Endothelial cell of umbilical vein (primary cell): ENCODE measurements at regions of chr1 and their contacts with region 1.

Region 1: GRCh38 chr1:8121261-8122170 is 95.4 kb upstream of the ERRFI1 start:
- DNase-seq: peak; percentile 99
- H3K4me3 ChIP-seq: peak overlapping the region in 1 of 3 experiments; percentile 6
- H3K27ac ChIP-seq: peak overlapping the region; percentile 96
- H3K4me1 ChIP-seq: peaks cover 50% of the 10 kb centered on the region
- H3K27me3 ChIP-seq: no peaks in the 10 kb centered on the region
- CTCF ChIP-seq: no peak
- POLR2A ChIP-seq: peak; percentile 44

Region 2: GRCh38 chr1:8026153-8026975 is 95.2 kb before region 1 on chr1 and contains the start of gene ERRFI1:
- CTCF ChIA-PET with region 1: interaction called, 9 read pairs
- POLR2A ChIA-PET with region 1: interaction called, 3 read pairs
- dilution Hi-C with region 1: no loop called
- intact Hi-C with region 1: loop called (anchors 2 kb)
- DNase-seq: peak; percentile 94
- H3K4me3 ChIP-seq: peak within 1 kb of the TSS; percentile 81 to 98 (median 94)
- H3K27ac ChIP-seq: peak within 1 kb of the TSS; percentile 63
- H3K4me1 ChIP-seq: peaks cover 57% of the 10 kb centered on the region
- H3K27me3 ChIP-seq: no peaks in the 10 kb centered on the region
- CTCF ChIP-seq: no peak
- POLR2A ChIP-seq: peak; percentile 99
- total RNA-seq, gene ERRFI1: 28.1 and 31.2 TPM in 2 replicates

Region 3: DNA sequence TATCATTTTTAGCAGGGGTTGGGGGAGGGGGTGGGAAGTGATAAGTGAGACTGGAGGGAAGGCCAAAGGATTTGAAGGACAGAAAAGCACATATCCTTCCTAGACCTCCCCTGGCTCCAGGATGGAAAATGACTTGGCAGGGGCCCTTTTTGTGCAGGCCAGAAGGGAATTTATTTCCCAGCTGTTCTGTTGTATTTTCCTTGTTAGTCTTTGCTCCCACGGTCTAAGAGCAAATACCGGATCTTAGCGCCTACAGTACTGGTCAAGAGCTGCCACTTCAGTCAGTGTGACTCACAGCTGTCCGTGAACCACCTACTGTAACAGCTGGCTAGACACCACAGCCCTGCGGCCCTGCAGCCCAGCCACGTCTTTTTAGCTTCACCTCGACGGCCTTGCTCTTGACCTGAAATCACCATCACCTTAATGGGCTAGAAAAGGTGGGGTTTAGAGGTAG is 44.4 kb before region 1 on chr1:
- CTCF ChIA-PET with region 1: interaction called, 7 read pairs
- POLR2A ChIA-PET with region 1: no interaction called
- dilution Hi-C with region 1: no loop called
- intact Hi-C with region 1: loop called (anchors 1 kb)
- DNase-seq: peak; percentile 94
- H3K4me3 ChIP-seq: no peak overlapping the region
- H3K27ac ChIP-seq: peak overlapping the region; percentile 76
- H3K4me1 ChIP-seq: peaks cover 22% of the 10 kb centered on the region
- H3K27me3 ChIP-seq: no peaks in the 10 kb centered on the region
- CTCF ChIP-seq: no peak
- POLR2A ChIP-seq: no peak

Region 4: GRCh38 chr1:8137481-8138244 is 16.1 kb after region 1 on chr1:
- CTCF ChIA-PET with region 1: interaction called, 22 read pairs
- POLR2A ChIA-PET with region 1: interaction called, 18 read pairs
- dilution Hi-C with region 1: no loop called
- intact Hi-C with region 1: loop called (anchors 1 kb)
- DNase-seq: peak; percentile 97
- H3K4me3 ChIP-seq: no peak overlapping the region
- H3K27ac ChIP-seq: peak overlapping the region; percentile 81
- H3K4me1 ChIP-seq: peaks cover 39% of the 10 kb centered on the region
- H3K27me3 ChIP-seq: no peaks in the 10 kb centered on the region
- CTCF ChIP-seq: no peak
- POLR2A ChIP-seq: no peak

Region 5: GRCh38 chr1:8197493-8198282 is 76.2 kb after region 1 on chr1:
- CTCF ChIA-PET with region 1: interaction called, 5 read pairs
- POLR2A ChIA-PET with region 1: no interaction called
- dilution Hi-C with region 1: no loop called
- intact Hi-C with region 1: loop called (anchors 1 kb)
- DNase-seq: peak; percentile 94
- H3K4me3 ChIP-seq: no peak overlapping the region
- H3K27ac ChIP-seq: peak overlapping the region; percentile 18
- H3K4me1 ChIP-seq: peaks cover 24% of the 10 kb centered on the region
- H3K27me3 ChIP-seq: no peaks in the 10 kb centered on the region
- CTCF ChIP-seq: no peak
- POLR2A ChIP-seq: peak; percentile 50

Region 6: GRCh38 chr1:8211589-8212442 is 90.3 kb after region 1 on chr1:
- CTCF ChIA-PET with region 1: interaction called, 5 read pairs
- POLR2A ChIA-PET with region 1: no interaction called
- dilution Hi-C with region 1: no loop called
- intact Hi-C with region 1: loop called (anchors 1 kb)
- DNase-seq: peak; percentile 92
- H3K4me3 ChIP-seq: no peak overlapping the region
- H3K27ac ChIP-seq: peak overlapping the region; percentile 85
- H3K4me1 ChIP-seq: peaks cover 17% of the 10 kb centered on the region
- H3K27me3 ChIP-seq: no peaks in the 10 kb centered on the region
- CTCF ChIP-seq: peak in 1 of 2 donors; percentile 14
- POLR2A ChIP-seq: peak; percentile 32

Region 7: DNA sequence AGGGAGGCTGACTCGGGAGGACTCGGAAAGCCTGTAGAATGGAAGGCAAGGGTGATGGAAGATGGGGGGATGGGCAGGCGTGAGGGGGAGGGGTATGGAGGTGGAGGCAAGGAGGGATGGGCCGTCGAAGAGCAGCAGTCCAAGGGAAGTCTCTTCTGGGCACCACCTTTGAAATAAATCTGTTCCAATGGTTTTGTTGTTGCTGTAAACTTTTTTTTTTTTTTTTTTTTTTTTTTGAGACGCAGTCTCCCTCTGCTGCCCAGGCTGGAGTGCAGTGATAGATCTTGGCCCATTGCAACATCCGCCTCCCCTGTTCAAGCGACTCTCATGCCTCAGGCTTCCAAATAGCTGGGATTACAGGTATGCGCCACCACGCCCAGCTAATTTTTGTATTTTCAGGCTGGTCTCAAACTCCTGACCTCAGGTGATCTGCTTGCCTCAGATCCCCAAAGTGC is 117.4 kb after region 1 on chr1:
- CTCF ChIA-PET with region 1: interaction called, 3 read pairs
- POLR2A ChIA-PET with region 1: no interaction called
- dilution Hi-C with region 1: no loop called
- intact Hi-C with region 1: loop called (anchors 2 kb)
- DNase-seq: peak; percentile 33
- H3K4me3 ChIP-seq: no peak overlapping the region
- H3K27ac ChIP-seq: peak overlapping the region; percentile 36
- H3K4me1 ChIP-seq: peaks cover 25% of the 10 kb centered on the region
- H3K27me3 ChIP-seq: no peaks in the 10 kb centered on the region
- CTCF ChIP-seq: peak; percentile 6 to 21
- POLR2A ChIP-seq: no peak

Region 8: DNA sequence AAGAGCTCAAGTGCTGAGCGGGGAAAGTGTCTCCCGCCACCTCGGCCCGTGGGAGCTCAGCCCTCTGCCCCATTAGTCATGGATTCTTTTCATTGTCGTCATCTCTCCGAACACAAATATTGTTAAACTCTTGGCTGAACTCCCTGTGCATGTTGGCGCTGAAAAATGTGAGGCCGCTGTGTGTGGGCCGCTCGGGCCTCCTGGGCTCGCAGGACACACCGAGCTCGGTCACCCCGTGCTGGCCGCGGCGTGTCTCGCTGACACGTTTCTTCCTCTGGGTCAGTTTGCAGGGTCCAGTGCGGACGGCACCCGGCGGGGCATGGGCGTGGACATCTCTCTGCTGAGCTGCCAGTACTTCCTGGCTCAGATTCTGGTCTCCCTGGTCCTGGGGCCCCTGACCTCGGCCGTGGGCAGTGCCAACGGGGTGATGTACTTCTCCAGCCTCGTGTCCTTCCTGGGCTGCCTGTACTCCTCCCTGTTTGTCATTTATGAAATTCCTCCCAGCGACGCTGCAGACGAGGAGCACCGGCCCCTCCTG is 222.0 kb after region 1 on chr1:
- CTCF ChIA-PET with region 1: no interaction called
- POLR2A ChIA-PET with region 1: no interaction called
- dilution Hi-C with region 1: no loop called
- intact Hi-C with region 1: no loop called
- DNase-seq: peak; percentile 36
- H3K4me3 ChIP-seq: no peak overlapping the region
- H3K27ac ChIP-seq: no peak overlapping the region
- H3K4me1 ChIP-seq: no peaks in the 10 kb centered on the region
- H3K27me3 ChIP-seq: no peaks in the 10 kb centered on the region
- CTCF ChIP-seq: no peak
- POLR2A ChIP-seq: no peak